ENCODE measurements at regions of chr11 and their contacts with region 1.

Region 1: DNA sequence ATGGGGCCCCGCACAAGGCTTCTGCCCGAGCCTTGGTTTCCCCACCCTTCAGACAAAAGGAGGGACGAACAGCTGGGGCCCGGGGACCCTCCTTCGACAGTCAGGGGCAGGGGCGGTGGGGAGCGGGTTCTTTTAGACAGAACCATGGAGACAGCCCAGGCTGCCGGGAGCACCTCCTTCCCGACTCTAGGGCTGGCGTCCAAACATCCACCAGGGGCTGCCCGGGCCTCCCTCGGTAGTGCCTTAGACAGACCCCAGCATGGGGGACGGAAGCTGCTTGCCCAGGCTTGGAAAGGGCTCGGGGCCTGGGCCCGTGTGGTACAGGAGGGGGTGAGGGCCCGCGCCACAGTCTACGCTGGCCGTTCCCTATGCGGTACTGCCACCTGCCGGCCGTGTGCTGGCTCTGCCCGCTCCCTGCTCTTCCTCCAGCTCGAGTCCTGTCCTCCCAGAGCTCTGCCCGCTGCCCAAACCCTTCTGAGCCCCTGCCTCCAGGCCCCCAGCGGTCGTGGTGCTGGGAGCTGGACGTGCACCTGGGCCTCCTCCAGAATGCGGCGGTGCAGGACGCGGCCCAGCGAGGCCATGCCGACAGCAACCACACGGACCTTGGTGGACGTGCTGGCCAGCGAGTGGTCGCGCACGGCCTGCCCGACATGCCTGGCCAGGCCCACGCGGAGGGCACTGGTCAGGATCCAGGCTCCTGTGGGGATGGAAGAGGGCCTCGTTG is 20.1 kb downstream of the TSSC4 start:
- DNase-seq: peak; percentile 71
- H3K4me3 ChIP-seq: no peak overlapping the region
- H3K27ac ChIP-seq: no peak overlapping the region
- H3K4me1 ChIP-seq: peaks cover 3% of the 10 kb centered on the region
- H3K27me3 ChIP-seq: no peaks in the 10 kb centered on the region
- CTCF ChIP-seq: peak; percentile 80 to 89 (median 89)
- POLR2A ChIP-seq: no peak

Region 2: GRCh38 chr11:2196970-2197770 is 223.5 kb before region 1 on chr11:
- intact Hi-C with region 1: loop called (anchors 5 kb)
- DNase-seq: peak; percentile 89
- H3K4me3 ChIP-seq: no peak overlapping the region
- H3K27ac ChIP-seq: no peak overlapping the region
- H3K4me1 ChIP-seq: no peaks in the 10 kb centered on the region
- H3K27me3 ChIP-seq: no peaks in the 10 kb centered on the region
- CTCF ChIP-seq: peak; percentile 84 to 94 (median 87)
- POLR2A ChIP-seq: no peak

Region 3: GRCh38 chr11:2305140-2305840 is 115.4 kb before region 1 on chr11:
- intact Hi-C with region 1: loop called (anchors 5 kb)
- DNase-seq: peak; percentile 90
- H3K4me3 ChIP-seq: no peak overlapping the region
- H3K27ac ChIP-seq: peak overlapping the region in 1 of 2 donors; percentile 35
- H3K4me1 ChIP-seq: peaks cover 49% of the 10 kb centered on the region
- H3K27me3 ChIP-seq: no peaks in the 10 kb centered on the region
- CTCF ChIP-seq: peak; percentile 82 to 95 (median 92)
- POLR2A ChIP-seq: no peak

Region 4: DNA sequence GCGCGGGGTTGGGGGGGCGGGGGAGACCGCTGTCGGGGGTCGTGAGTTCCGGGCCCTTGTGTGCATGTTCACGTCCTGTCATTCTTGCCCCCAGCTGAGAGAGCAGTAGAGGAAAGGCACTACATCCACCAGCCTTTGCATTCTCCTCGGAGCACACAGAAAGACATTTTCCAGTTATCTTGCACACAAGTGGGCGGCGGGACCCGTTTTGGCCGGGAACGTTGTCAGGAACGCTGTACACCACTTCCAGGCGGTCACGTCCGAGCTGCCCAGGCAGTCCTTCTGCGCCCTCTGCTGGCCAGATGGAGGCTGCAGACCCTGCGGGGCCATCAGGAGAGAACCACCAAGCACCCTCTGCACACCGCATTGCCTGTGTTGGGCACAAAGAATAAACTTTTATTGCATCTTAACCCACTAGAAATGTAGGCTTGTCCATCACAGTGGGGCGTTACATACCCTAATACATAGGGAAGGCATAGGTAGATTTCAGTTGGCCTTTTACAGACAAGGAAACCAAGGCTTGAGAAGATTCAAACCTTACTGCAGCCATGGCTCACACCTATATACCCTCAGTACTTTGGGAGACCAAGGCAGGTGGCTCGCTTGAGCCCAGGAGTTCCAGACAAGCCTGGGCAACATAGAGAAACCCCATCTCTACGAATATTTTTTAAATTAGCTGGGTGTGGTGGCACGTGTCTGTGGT is 467.8 kb after region 1 on chr11:
- intact Hi-C with region 1: loop called (anchors 10 kb)
- DNase-seq: peak; percentile 96
- H3K4me3 ChIP-seq: no peak overlapping the region
- H3K27ac ChIP-seq: peak overlapping the region in 1 of 2 donors; percentile 10
- H3K4me1 ChIP-seq: peaks cover 48% of the 10 kb centered on the region
- H3K27me3 ChIP-seq: no peaks in the 10 kb centered on the region
- CTCF ChIP-seq: peak; percentile 96 to 98 (median 97)
- POLR2A ChIP-seq: no peak